CD8-positive, alpha-beta T cell (primary cell): ENCODE measurements at regions of chr6 and their contacts with region 1.

Region 1: GRCh38 chr6:26122793-26123674 is 35.8 kb downstream of the HFE start:
- DNase-seq: peak; percentile 73 to 99 (median 91)
- ATAC-seq: peak; percentile 54
- H3K4me3 ChIP-seq: peak overlapping the region; percentile 78 to 98
- H3K4me3 Mint-ChIP-seq: peak overlapping the region; percentile 94
- H3K27ac ChIP-seq: peak overlapping the region; percentile 87 to 94
- H3K27ac Mint-ChIP-seq: peak overlapping the region; percentile 99
- H3K4me1 ChIP-seq: peaks cover 20% of the 10 kb centered on the region
- H3K4me1 Mint-ChIP-seq: peaks cover 27% of the 10 kb centered on the region
- H3K27me3 ChIP-seq: no peaks in the 10 kb centered on the region
- H3K27me3 Mint-ChIP-seq: no peaks in the 10 kb centered on the region
- CTCF ChIP-seq: no peak

Region 2: DNA sequence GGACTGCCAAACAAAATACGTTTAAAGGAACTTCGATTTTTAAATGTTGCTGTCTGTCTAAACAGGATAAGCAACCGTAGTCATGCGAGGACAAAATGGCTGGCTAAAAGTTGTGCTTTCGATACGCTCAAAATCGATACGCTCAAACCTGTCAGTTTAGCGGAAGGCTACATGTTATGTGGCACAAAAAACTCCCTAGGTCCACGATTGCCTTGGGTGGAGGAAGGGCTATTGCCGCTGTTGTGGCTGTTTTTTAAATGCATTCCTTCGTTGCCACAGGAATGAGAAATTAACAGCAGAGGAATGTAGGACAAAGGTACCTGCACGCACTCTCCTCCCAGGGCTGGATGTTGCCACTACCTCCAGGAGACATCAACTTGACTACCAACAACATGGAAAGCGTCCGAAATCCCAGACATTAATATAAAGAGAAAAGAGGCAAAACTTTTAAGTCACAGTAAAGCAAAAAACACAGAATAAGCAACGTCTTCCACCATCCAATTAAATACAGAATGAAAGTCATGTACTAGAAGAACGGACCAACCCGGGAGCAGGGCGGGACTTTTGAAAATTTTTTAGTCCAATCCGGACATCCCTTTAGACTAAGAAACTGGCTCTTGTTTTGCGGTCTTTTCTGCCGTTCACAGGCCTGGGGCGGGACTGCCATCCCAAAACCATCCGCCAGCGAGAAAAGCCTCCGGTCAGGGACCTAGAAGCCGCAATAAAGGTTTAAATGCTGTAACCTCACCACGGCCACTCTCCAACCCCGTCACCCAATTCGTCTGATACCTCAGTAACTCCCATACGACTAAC is 68.0 kb before region 1 on chr6:
- CTCF ChIA-PET with region 1: no interaction called
- POLR2A ChIA-PET with region 1: interaction called, 106 read pairs
- intact Hi-C with region 1: loop called (anchors 1 kb)
- DNase-seq: peak; percentile 71 to 94 (median 88)
- ATAC-seq: peak; percentile 72
- H3K4me3 ChIP-seq: peak overlapping the region; percentile 75 to 85
- H3K4me3 Mint-ChIP-seq: peak overlapping the region; percentile 96
- H3K27ac ChIP-seq: peak overlapping the region; percentile 85 to 96
- H3K27ac Mint-ChIP-seq: peak overlapping the region; percentile 99
- H3K4me1 ChIP-seq: peaks cover 17% of the 10 kb centered on the region
- H3K4me1 Mint-ChIP-seq: peaks cover 23% of the 10 kb centered on the region
- H3K27me3 ChIP-seq: no peaks in the 10 kb centered on the region
- H3K27me3 Mint-ChIP-seq: no peaks in the 10 kb centered on the region
- CTCF ChIP-seq: no peak

Region 3: GRCh38 chr6:26136321-26136720 is 13.3 kb after region 1 on chr6:
- CTCF ChIA-PET with region 1: interaction called, 6 read pairs
- POLR2A ChIA-PET with region 1: interaction called, 40 read pairs
- intact Hi-C with region 1: no loop called
- DNase-seq: no peak
- ATAC-seq: no peak
- H3K4me3 ChIP-seq: no peak overlapping the region
- H3K4me3 Mint-ChIP-seq: no peak overlapping the region
- H3K27ac ChIP-seq: no peak overlapping the region
- H3K27ac Mint-ChIP-seq: no peak overlapping the region
- H3K4me1 ChIP-seq: no peaks in the 10 kb centered on the region
- H3K4me1 Mint-ChIP-seq: peaks cover 36% of the 10 kb centered on the region
- H3K27me3 ChIP-seq: no peaks in the 10 kb centered on the region
- H3K27me3 Mint-ChIP-seq: no peaks in the 10 kb centered on the region
- CTCF ChIP-seq: no peak

Region 4: GRCh38 chr6:26196846-26197648 is 74.0 kb after region 1 on chr6:
- CTCF ChIA-PET with region 1: interaction called, 7 read pairs
- POLR2A ChIA-PET with region 1: interaction called, 525 read pairs
- intact Hi-C with region 1: loop called (anchors 1 kb)
- DNase-seq: peak; percentile 53 to 95 (median 79)
- ATAC-seq: peak; percentile 57
- H3K4me3 ChIP-seq: peak overlapping the region; percentile 78 to 82
- H3K4me3 Mint-ChIP-seq: peak overlapping the region; percentile 96
- H3K27ac ChIP-seq: peak overlapping the region; percentile 88 to 89
- H3K27ac Mint-ChIP-seq: peak overlapping the region; percentile 99
- H3K4me1 ChIP-seq: peaks cover 20% of the 10 kb centered on the region
- H3K4me1 Mint-ChIP-seq: peaks cover 44% of the 10 kb centered on the region
- H3K27me3 ChIP-seq: no peaks in the 10 kb centered on the region
- H3K27me3 Mint-ChIP-seq: no peaks in the 10 kb centered on the region
- CTCF ChIP-seq: no peak

Region 5: DNA sequence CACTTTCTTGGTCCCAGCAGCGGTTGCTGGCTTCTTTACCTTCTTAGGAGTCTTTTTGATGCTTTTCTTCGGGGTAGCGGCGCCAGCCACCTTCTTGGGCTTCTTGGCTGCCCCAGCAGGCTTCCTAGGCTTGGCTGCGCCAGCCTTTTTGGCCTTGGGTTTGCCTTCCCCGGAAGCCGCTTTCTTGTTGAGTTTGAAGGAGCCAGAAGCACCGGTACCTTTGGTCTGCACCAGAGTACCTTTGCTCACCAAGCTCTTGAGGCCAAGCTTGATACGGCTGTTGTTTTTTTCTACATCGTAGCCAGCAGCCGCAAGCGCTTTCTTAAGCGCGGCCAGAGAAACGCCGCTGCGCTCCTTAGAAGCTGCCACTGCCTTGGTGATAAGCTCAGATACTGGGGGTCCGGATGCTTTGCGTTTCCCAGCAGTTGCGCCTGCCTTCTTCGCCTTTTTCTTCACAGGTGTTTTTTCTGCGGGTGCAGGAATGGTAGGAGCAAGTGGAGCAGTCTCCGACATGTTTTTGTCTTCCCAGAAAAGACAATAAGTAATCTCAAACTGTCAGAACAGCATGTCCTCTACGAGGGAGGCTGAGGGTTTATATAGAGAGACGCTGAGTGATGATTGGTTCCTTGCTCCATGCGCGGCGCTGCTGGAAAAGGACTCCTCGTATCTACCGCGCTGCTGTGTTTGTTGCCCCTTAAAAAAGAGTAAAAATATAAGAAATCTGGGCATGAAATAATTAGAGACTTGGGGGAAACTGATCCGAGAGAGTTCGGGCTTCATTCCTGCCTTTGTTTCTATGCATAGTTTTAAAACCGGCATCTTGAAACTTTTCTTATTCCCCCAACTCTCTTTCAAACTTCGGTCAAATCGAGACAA is 111.6 kb after region 1 on chr6:
- CTCF ChIA-PET with region 1: no interaction called
- POLR2A ChIA-PET with region 1: interaction called, 140 read pairs
- intact Hi-C with region 1: no loop called
- DNase-seq: peak; percentile 55 to 88 (median 66)
- ATAC-seq: peak; percentile 63
- H3K4me3 ChIP-seq: peak overlapping the region; percentile 66 to 76
- H3K4me3 Mint-ChIP-seq: peak overlapping the region; percentile 85
- H3K27ac ChIP-seq: peak overlapping the region; percentile 84 to 92
- H3K27ac Mint-ChIP-seq: peak overlapping the region; percentile 93
- H3K4me1 ChIP-seq: peaks cover 14% of the 10 kb centered on the region
- H3K4me1 Mint-ChIP-seq: peaks cover 31% of the 10 kb centered on the region
- H3K27me3 ChIP-seq: no peaks in the 10 kb centered on the region
- H3K27me3 Mint-ChIP-seq: no peaks in the 10 kb centered on the region
- CTCF ChIP-seq: no peak

Region 6: GRCh38 chr6:26299286-26300042 is 176.4 kb after region 1 on chr6:
- CTCF ChIA-PET with region 1: no interaction called
- POLR2A ChIA-PET with region 1: no interaction called
- intact Hi-C with region 1: no loop called
- DNase-seq: no peak
- ATAC-seq: no peak
- H3K4me3 ChIP-seq: no peak overlapping the region
- H3K4me3 Mint-ChIP-seq: no peak overlapping the region
- H3K27ac ChIP-seq: no peak overlapping the region
- H3K27ac Mint-ChIP-seq: no peak overlapping the region
- H3K4me1 ChIP-seq: peaks cover 5% of the 10 kb centered on the region
- H3K4me1 Mint-ChIP-seq: peaks cover 10% of the 10 kb centered on the region
- H3K27me3 ChIP-seq: no peaks in the 10 kb centered on the region
- H3K27me3 Mint-ChIP-seq: no peaks in the 10 kb centered on the region
- CTCF ChIP-seq: no peak

Region 7: GRCh38 chr6:27132532-27133280 is 1009.7 kb after region 1 on chr6:
- CTCF ChIA-PET with region 1: no interaction called
- POLR2A ChIA-PET with region 1: interaction called, 59 read pairs
- intact Hi-C with region 1: loop called (anchors 1 to 2 kb)
- DNase-seq: peak; percentile 80 to 99 (median 87)
- ATAC-seq: peak; percentile 82
- H3K4me3 ChIP-seq: peak overlapping the region; percentile 76 to 83
- H3K4me3 Mint-ChIP-seq: no peak overlapping the region
- H3K27ac ChIP-seq: peak overlapping the region; percentile 86 to 92
- H3K27ac Mint-ChIP-seq: no peak overlapping the region
- H3K4me1 ChIP-seq: peaks cover 15% of the 10 kb centered on the region
- H3K4me1 Mint-ChIP-seq: peaks cover 21% of the 10 kb centered on the region
- H3K27me3 ChIP-seq: no peaks in the 10 kb centered on the region
- H3K27me3 Mint-ChIP-seq: no peaks in the 10 kb centered on the region
- CTCF ChIP-seq: no peak

Region 8: GRCh38 chr6:27168586-27169443 is 1045.8 kb after region 1 on chr6:
- CTCF ChIA-PET with region 1: no interaction called
- POLR2A ChIA-PET with region 1: no interaction called
- intact Hi-C with region 1: no loop called
- DNase-seq: no peak
- ATAC-seq: no peak
- H3K4me3 ChIP-seq: no peak overlapping the region
- H3K4me3 Mint-ChIP-seq: no peak overlapping the region
- H3K27ac ChIP-seq: no peak overlapping the region
- H3K27ac Mint-ChIP-seq: no peak overlapping the region
- H3K4me1 ChIP-seq: no peaks in the 10 kb centered on the region
- H3K4me1 Mint-ChIP-seq: no peaks in the 10 kb centered on the region
- H3K27me3 ChIP-seq: no peaks in the 10 kb centered on the region
- H3K27me3 Mint-ChIP-seq: no peaks in the 10 kb centered on the region
- CTCF ChIP-seq: no peak

Region 9: DNA sequence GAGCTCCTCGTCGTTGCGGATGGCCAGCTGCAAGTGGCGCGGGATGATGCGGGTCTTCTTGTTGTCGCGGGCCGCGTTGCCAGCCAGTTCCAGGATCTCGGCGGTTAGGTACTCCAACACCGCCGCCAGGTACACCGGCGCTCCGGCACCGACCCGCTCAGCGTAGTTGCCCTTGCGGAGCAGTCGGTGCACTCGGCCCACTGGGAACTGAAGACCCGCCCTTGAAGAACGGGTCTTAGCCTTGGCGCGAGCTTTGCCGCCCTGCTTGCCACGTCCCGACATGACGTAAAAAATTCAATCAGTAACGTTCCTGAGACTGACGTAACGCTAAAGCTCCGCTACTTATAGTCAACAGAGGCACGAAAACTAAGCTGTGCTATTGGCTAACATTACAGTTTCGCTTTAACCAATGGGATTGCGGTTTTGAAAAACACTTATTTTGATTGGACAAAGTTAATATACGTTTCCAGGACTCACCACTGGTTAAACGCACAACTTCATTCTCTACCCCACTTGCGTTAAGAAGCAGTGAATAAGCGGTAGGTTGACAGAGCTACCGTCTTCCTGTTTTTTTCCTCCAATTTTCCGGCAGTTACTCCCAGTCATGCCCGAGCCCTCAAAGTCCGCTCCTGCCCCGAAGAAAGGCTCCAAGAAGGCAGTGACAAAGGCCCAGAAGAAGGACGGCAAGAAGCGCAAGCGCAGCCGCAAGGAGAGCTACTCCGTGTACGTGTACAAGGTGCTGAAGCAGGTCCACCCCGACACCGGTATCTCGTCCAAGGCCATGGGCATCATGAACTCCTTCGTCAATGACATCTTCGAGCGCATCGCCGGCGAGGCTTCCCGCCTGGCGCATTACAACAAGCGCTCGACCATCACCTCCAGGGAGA is 1715.3 kb after region 1 on chr6:
- CTCF ChIA-PET with region 1: no interaction called
- POLR2A ChIA-PET with region 1: interaction called, 47 read pairs
- intact Hi-C with region 1: loop called in 1 of 2 experiments (anchors 1 kb)
- DNase-seq: peak; percentile 61 to 98 (median 74)
- ATAC-seq: peak; percentile 70
- H3K4me3 ChIP-seq: peak overlapping the region; percentile 64 to 76
- H3K4me3 Mint-ChIP-seq: no peak overlapping the region
- H3K27ac ChIP-seq: peak overlapping the region; percentile 91 to 98
- H3K27ac Mint-ChIP-seq: no peak overlapping the region
- H3K4me1 ChIP-seq: peaks cover 35% of the 10 kb centered on the region
- H3K4me1 Mint-ChIP-seq: peaks cover 21% of the 10 kb centered on the region
- H3K27me3 ChIP-seq: peaks cover 0 to 4% of the 10 kb centered on the region in 2 experiments
- H3K27me3 Mint-ChIP-seq: peaks cover 7% of the 10 kb centered on the region
- CTCF ChIP-seq: no peak